ENCODE measurements at regions of chr7 and their contacts with region 1.

Region 1: GRCh38 chr7:55951637-55952351 is at the start of gene MRPS17:
- DNase-seq: peak; percentile 96
- ATAC-seq: peak; percentile 100
- total RNA-seq, gene MRPS17: 21.0 TPM

Region 2: DNA sequence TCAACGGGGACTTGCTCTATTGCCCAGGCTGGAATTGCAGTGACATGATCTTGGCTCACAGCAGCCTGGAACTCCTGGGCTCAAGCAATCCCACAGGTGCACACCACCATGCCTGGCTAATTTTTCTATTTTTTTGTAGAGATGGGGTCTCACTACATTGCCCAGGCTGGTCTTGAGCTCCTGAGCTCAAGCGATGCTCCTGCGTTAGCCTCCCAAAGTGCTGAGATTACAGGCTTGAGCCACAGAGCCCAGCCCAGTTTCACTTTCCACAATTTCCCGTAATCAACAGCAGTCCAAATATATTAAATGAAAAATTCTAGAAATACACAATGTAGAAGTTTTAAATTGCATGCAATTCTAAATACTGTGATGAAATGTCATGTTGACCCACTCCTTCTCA is 113.2 kb before region 1 on chr7:
- intact Hi-C with region 1: no loop called
- DNase-seq: no peak
- ATAC-seq: no peak

Region 3: GRCh38 chr7:55887821-55888247 is 64.0 kb before region 1 on chr7:
- intact Hi-C with region 1: loop called (anchors 10 kb)
- DNase-seq: no peak
- ATAC-seq: no peak

Region 4: DNA sequence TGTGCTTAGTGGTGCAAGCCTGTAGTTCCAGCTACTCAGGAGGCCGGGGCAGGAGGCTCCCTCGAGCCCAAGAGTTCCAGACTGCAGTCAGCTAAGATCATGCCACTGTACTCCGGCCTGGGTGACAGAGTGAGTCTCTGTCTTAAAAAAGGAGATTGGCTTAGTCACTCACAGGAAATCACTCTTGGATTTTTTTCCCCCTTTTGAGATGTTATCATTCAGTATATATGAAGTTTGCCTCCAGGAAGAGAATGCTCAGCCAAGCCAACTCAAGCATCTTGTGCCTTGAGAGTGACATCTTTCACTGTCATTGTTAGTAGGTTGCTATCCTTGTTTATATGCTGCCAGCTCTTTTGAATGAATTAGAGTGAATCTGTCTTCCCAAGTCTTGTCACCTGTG is 40.6 kb after region 1 on chr7:
- intact Hi-C with region 1: no loop called
- DNase-seq: no peak
- ATAC-seq: no peak

Measured in Right ventricle myocardium superior (tissue), 1 donor.